Left ventricle myocardium superior (tissue), 1 donor: ENCODE measurements at regions of chr12 and their contacts with region 1.

Region 1: DNA sequence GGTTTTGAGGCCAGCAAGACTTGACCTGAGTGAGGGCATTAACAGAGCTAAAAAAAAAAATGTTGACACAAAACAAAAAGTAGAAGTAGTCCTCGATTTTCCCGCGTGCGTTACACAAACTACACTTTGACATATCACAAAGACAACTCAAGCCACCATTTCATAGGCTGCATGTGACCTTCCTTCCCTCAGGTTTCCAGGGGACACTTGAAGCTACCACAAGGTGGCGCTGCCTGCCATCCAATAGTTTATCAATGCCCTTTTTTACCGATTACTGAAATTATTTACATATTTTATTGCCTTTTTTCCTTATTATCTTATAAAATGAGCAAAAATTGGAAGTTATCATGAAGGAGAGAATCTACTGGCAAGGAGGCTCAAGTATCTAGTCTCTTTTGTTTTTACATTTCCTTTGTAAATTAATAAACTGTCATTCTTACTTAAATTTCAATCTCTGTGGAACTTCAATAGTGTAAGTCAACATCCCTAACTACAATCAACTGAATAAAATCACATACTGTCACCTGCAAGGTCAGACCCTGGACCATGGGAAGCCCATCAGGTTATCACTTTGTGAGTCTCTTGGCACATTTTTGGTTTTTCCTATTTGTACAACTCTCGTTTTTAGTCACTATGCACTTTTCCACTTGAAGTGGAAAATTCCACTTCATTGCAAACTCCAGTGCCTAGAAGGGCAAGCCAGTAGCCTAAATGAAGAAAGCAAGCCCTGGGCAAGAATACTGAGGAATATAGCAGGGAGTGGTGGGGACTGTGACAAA is 84.6 kb upstream of the CPSF6 start:
- DNase-seq: peak; percentile 77
- ATAC-seq: peak; percentile 65

Region 2: GRCh38 chr12:69254046-69254445 is 99.3 kb after region 1 on chr12:
- intact Hi-C with region 1: loop called (anchors 5 kb)
- DNase-seq: no peak
- ATAC-seq: peak; percentile 51

Region 3: DNA sequence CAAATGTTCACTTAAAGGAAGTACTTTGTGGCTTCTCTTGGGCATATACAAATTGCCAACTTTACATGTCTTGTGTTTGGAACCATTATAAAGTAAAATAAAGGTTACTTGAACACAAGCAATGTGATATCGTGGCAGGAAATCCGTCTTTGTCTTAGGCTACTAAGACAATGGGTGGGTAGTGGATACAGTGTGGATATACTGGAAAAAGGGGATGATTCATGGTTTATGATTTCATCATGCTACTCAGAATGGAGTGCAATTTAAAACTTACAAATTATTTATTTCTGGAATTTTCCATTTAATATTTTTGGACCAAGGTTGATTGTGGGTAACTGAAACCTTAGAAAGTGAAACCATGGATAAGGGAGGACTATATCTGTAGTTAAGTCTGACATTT is 718.7 kb after region 1 on chr12:
- intact Hi-C with region 1: no loop called
- DNase-seq: no peak
- ATAC-seq: no peak